ENCODE measurements at regions of chr17 and their contacts with region 1.

Region 1: DNA sequence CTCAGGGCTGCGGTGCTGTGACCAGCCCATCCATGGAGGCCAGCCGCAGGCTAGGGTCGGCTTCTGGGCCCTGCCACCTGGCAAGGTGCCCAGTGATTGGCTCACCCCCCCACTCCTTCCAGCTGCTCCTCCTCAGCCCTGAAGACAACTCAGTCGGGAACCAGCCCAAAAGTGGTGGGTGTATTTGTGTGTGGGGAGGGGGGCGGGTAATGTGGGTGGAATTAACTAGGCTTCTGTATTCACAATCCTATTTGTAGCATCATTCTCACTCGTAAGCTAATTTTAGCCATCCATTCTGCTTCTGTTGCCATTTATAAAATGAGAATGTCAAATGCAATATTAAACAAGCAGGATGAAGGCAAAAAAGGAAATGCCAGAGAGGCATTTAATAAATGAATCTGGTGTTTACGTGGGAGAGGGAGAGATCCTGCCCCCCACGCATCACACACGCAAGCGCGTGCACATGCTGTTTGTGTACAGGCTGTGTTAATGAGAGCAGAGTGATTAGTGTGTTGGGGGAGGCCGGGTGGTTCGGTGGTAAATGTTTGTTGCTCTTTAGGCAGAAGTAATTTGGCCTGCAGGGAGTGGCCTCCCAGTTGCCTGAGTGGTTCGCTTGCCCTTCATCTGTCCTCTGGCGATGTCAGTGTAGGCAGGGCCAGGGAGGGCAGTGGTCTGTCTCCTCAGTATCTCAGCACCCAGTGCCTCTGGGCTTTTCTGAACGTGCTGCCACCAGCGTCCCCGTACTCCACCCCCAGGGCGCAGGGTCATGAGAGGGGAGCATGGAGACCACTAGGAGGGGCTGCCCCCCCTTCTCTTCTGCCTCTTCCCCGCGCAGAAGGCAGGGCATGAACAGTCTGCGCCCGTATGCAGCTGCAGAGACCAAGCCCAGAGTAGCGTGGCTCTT is 140.1 kb downstream of the CCDC182 start:
- DNase-seq: no peak
- H3K4me3 Mint-ChIP-seq: peak overlapping the region; percentile 54
- H3K27ac Mint-ChIP-seq: peak overlapping the region; percentile 94
- H3K4me1 Mint-ChIP-seq: peaks cover 70% of the 10 kb centered on the region
- H3K27me3 Mint-ChIP-seq: no peaks in the 10 kb centered on the region

Region 2: DNA sequence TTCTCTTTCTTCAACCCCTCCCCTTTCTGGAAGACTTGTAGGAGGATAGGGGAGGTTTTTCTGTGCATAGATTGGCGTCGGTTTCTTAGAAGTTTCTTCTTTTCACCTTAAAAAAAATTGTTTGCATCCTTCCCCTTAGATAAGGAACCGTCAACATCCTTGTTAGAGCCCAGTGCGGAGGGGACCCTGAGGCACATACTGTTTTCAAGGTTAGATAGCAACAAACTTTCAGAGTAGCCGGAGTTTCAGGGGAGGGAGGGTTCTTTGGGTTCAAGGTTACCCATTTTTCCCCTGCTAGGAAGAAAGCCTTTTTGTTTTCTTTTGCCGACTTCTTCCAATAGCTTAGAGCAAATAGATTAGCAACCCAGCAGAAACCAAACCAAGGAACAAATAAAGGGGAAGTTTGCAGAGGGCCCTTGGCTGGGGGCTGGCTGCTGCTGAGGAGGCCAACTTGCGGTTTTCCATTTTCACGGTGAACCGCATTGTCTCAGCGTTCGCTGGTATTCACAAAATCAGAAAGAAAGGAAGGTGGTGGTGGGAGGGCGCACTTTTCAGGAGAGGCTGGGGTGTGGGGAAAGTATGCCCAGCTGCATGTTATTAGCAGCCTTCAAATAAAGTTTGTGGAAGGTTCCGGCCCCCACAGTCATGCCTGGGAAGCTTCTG is 319.9 kb before region 1 on chr17:
- intact Hi-C with region 1: loop called (anchors 5 kb)
- DNase-seq: peak; percentile 64
- H3K4me3 Mint-ChIP-seq: peak overlapping the region; percentile 59
- H3K27ac Mint-ChIP-seq: peak overlapping the region; percentile 94
- H3K4me1 Mint-ChIP-seq: peaks cover 94% of the 10 kb centered on the region
- H3K27me3 Mint-ChIP-seq: no peaks in the 10 kb centered on the region

Region 3: GRCh38 chr17:57574040-57574545 is 30.9 kb before region 1 on chr17:
- intact Hi-C with region 1: no loop called
- DNase-seq: no peak
- H3K4me3 Mint-ChIP-seq: no peak overlapping the region
- H3K27ac Mint-ChIP-seq: no peak overlapping the region
- H3K4me1 Mint-ChIP-seq: no peaks in the 10 kb centered on the region
- H3K27me3 Mint-ChIP-seq: no peaks in the 10 kb centered on the region

Region 4: GRCh38 chr17:57671667-57672632 is 66.9 kb after region 1 on chr17:
- intact Hi-C with region 1: loop called (anchors 5 kb)
- DNase-seq: peak; percentile 55
- H3K4me3 Mint-ChIP-seq: no peak overlapping the region
- H3K27ac Mint-ChIP-seq: no peak overlapping the region
- H3K4me1 Mint-ChIP-seq: peaks cover 27% of the 10 kb centered on the region
- H3K27me3 Mint-ChIP-seq: no peaks in the 10 kb centered on the region

Region 5: DNA sequence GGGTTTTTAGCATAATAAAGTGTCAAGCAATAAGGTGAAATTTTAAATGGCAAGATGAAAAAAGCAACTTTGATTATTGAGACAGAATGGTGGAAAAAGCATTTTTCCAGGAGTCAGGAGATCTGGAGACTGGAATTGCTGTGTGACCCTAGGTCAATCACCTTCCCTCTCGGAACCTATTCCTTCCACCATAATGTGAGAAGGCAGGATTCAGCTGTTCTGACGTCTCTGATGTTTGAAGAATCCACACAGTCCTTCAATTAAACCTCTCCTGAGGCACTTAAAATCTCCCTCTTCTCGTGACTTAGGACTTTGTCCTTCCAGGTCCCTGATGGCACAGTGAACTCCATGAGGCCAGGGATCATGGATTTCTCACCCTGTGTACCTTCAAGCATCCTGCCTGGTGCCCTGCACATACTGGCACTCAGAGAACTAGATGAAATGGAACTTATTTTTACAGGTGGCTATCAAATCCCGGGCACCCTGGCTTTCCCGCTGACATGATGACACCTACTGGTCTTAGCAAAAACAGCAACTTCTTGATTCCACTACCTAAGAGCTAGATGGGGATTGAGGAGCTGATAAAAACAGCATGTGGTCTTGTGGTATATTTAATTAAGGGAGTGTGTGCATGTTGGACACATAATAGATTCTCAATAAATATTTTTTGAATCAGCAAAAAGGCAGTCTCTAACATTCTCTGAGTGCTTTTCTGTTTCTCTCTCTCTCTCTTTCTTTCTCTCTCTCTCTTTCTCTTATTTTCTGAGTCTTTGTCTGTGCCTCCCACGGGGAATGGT is 142.4 kb after region 1 on chr17:
- intact Hi-C with region 1: loop called (anchors 5 kb)
- DNase-seq: peak; percentile 10
- H3K4me3 Mint-ChIP-seq: no peak overlapping the region
- H3K27ac Mint-ChIP-seq: no peak overlapping the region
- H3K4me1 Mint-ChIP-seq: peaks cover 4% of the 10 kb centered on the region
- H3K27me3 Mint-ChIP-seq: peaks cover 24% of the 10 kb centered on the region

Measured in activated T-helper 1 cell treated with anti-CD3 and anti-CD28 coated beads, Interleukin-12 subunit alpha, Interleukin-12 subunit beta, Interleukin-2, Interleukin-4 antibody, amounts not matched to agents 30 ng/mL and 10 ng/mL and 1 ng/mL, durations not matched to agents 14 hours and 24 hours and 36 hours (primary cell).